Lower leg skin (tissue), 4 donors: ENCODE measurements at regions of chr2 and their contacts with region 1.

Region 1: DNA sequence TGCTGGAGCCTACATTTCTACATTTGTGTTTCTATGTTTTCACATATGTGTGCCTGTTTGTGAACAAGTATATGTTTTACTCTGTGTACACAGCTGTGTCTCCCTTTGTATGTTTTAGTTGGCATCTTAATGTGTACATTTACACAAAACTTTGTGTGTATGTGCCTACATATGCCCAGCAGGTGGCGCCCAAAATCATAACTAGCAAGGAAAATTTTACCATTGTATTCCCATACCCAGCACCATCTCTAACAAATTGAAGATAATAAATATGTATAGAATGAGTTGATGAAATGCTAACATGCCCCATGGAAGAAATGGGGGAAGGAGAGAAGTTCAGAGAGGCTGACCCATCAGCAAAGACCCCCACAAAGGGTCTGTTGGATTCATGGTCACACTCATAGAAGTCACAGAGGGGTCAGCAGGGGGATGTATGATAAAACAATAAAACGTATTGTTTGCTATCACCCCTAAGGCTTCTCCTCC is 48.1 kb downstream of the PKDCC start:
- DNase-seq: peak; percentile 79 to 96
- H3K4me3 ChIP-seq: no peak overlapping the region
- CTCF ChIP-seq: peak in 1 of 3 donors; percentile 73
- POLR2A ChIP-seq: no peak

Region 2: GRCh38 chr2:41457033-41457432 is 638.9 kb before region 1 on chr2:
- intact Hi-C with region 1: no loop called
- DNase-seq: no peak
- H3K4me3 ChIP-seq: no peak overlapping the region
- CTCF ChIP-seq: no peak
- POLR2A ChIP-seq: no peak

Region 3: GRCh38 chr2:42238644-42239288 is 142.8 kb after region 1 on chr2:
- intact Hi-C with region 1: loop called (anchors 5 kb)
- DNase-seq: peak in 1 of 2 donors; percentile 24
- H3K4me3 ChIP-seq: no peak overlapping the region
- CTCF ChIP-seq: peak in 1 of 3 donors; percentile 34
- POLR2A ChIP-seq: no peak

Region 4: DNA sequence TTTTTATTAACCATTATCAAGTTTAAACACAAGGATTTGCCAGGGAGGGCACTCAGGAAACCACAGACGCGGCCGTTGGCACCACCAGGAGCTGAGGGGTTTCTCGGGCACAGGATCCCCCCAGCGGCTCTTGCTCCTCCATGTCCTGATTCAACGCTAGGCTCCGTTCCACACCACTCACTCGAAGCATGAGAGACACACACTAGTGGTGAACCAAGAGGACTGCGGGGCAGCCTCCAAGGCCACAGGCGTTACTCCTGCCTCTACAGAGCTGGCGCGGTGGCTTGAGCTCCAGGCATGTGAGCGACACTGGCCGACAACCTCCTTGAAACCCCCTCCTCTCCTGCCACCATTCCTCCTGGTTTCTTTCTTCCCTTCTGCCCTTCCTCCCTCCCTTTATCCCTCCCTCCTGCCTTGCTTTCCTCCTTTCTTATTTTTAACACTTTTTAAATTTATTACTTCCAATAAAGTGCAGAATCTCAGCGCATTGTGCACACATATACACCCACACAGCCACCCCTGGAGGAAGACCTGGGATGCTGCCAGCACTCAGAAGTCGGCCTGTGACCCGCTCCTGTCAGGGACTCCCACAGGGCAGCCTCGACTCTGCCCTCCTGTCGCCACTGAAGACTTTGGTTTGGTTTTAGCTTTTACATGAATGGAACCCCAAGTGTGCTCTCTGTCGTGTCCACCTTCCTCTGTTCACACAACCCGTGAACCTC is 243.4 kb after region 1 on chr2:
- intact Hi-C with region 1: loop called (anchors 10 kb)
- DNase-seq: no peak
- H3K4me3 ChIP-seq: no peak overlapping the region
- CTCF ChIP-seq: no peak
- POLR2A ChIP-seq: no peak